ENCODE measurements at regions of chr3 and their contacts with region 1.

Region 1: DNA sequence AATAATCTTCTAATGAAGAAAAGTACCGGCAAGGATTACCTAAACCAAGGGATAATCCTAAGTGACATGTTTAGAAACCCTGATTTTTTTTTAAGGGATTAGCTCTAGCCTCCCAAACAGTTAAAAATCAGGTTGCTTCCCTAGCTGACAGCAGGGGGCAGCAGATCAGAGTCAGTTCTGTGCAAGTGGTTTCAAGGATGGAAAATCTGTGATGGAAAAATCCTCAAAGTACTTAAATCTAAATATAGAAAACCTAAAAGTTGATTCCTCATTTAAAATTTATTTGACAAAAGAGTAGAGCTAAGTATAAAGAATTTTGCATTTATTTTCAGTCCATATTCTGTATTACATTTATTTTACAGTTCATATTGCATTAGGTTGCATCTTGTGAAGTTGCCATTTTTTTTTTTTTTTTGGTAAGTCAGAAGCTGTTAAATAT is 107.6 kb downstream of the PEX5L start:
- DNase-seq: peak in 1 of 2 experiments; percentile 61
- H3K4me3 ChIP-seq: no peak overlapping the region
- H3K27ac ChIP-seq: no peak overlapping the region
- H3K4me1 ChIP-seq: no peaks in the 10 kb centered on the region
- H3K27me3 ChIP-seq: no peaks in the 10 kb centered on the region
- CTCF ChIP-seq: peak; percentile 95

Region 2: DNA sequence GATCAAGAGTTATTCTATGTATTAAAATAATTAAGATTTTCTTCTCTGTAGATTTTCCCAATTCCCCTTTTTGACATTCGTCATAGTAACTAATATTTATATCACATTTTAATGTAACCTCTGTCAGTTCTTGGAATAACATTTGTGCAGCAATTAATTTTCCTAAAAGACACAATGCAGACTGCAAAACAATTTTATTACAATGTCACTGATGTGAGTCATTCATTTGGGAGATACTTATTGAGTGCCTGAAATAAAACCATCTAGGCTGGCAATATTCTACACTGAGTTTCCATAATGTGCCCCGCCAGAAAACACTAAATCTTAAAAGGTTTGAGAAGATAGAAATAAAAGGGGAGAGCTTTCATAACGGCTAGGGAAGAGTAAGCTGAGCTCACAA is 282.9 kb before region 1 on chr3:
- CTCF ChIA-PET with region 1: interaction called, 4 read pairs
- POLR2A ChIA-PET with region 1: no interaction called
- intact Hi-C with region 1: loop called (anchors 5 kb)
- DNase-seq: no peak
- H3K4me3 ChIP-seq: no peak overlapping the region
- H3K27ac ChIP-seq: no peak overlapping the region
- H3K4me1 ChIP-seq: peaks cover 15% of the 10 kb centered on the region
- H3K27me3 ChIP-seq: no peaks in the 10 kb centered on the region
- CTCF ChIP-seq: no peak

Region 3: DNA sequence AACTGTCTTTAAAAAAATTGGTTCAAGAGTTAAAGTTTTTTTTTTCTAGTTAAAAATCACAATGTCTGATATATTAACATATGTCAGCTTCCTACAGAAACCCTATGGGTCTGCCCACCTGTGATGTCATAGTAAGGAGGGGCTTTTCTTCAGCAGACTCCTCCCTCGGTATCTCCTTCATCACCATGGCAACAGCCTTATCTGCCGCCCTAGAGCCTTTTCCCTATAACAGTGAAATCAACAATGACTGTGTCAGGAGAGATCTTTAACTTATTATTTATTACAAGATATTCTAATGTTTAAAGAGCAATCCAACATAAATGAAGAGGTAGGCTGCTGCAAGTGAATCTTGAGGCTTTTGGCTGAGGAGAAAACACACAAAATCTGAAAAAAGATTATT is 31.1 kb before region 1 on chr3:
- CTCF ChIA-PET with region 1: no interaction called
- POLR2A ChIA-PET with region 1: no interaction called
- intact Hi-C with region 1: no loop called
- DNase-seq: peak; percentile 19 to 71
- H3K4me3 ChIP-seq: no peak overlapping the region
- H3K27ac ChIP-seq: no peak overlapping the region
- H3K4me1 ChIP-seq: no peaks in the 10 kb centered on the region
- H3K27me3 ChIP-seq: no peaks in the 10 kb centered on the region
- CTCF ChIP-seq: no peak

Region 4: DNA sequence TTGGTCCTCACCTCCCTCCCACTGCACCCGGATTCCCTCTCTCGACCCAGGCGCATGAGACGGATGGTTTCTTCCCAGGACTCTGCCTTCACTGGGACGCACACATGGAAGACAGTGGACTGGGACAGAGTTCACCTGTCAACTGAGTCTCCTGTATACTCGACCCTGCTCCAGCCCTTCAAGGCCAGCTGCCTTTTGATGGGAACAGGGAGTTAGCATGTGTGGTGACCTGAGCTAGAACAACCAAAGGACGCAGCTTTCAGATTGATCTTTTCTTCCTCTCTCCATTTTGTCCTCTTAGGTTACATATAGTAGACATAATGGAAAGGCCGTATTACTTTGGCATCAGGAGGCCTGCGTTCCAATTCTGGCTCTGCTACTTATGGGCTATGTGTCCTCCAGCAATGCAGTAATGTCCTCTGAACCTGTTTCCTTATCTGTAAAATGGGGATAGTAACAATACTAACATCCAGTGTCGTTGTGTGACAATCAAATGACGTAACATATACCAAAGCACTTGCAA is 13.5 kb after region 1 on chr3:
- CTCF ChIA-PET with region 1: no interaction called
- POLR2A ChIA-PET with region 1: no interaction called
- intact Hi-C with region 1: no loop called
- DNase-seq: no peak
- H3K4me3 ChIP-seq: no peak overlapping the region
- H3K27ac ChIP-seq: no peak overlapping the region
- H3K4me1 ChIP-seq: no peaks in the 10 kb centered on the region
- H3K27me3 ChIP-seq: no peaks in the 10 kb centered on the region
- CTCF ChIP-seq: no peak

Region 5: DNA sequence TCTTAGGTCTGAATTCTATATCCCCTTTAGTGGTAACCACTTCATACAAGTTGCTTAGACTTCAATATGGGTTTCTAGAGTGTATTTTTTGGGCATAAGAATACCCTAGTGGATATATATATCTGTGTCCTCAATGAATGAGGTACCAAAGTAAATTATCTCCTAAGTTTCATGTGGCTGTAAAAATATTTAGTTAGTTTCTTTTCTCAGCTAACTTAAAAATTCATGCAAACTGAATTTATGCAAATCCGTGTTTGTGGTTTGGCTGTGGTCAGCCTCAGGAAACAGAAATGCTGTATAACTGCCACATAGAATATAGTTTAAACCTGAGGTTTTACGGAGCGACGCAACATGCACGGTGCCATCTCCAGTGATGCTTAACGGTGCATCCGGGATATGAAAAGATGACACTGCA is 27.3 kb after region 1 on chr3:
- CTCF ChIA-PET with region 1: interaction called, 16 read pairs
- POLR2A ChIA-PET with region 1: interaction called, 4 read pairs
- intact Hi-C with region 1: no loop called
- DNase-seq: no peak
- H3K4me3 ChIP-seq: no peak overlapping the region
- H3K27ac ChIP-seq: no peak overlapping the region
- H3K4me1 ChIP-seq: no peaks in the 10 kb centered on the region
- H3K27me3 ChIP-seq: no peaks in the 10 kb centered on the region
- CTCF ChIP-seq: no peak

Region 6: DNA sequence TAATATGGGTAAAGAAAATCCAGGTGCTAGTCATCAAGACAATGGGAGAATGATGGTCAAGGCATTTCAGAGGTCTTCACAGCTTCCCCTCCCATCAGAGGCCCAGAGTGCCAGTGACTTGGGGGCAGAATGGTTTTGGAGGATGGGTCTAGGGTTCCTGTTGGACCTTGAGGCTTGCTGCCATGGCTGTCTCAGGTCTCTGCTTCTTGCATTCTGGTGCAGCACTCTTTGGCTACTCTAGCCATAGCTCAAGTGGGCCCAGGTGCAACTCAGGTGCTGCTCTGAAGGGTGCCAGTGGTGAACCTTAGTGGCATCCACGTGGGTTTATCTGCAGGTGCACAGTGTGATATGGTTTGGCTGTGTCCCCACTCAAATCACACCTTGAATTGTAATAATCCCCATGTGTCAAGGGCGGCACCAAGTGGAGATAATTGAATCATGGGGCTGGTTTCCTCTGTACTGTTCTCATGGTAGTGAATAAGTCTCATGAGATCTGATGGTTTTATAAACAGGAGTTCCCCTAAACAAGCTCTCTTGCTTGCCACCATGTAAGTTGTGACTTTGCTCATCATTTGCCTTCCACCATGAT is 156.1 kb after region 1 on chr3:
- CTCF ChIA-PET with region 1: no interaction called
- POLR2A ChIA-PET with region 1: no interaction called
- intact Hi-C with region 1: loop called (anchors 2 kb)
- DNase-seq: peak in 1 of 2 experiments; percentile 15
- H3K4me3 ChIP-seq: no peak overlapping the region
- H3K27ac ChIP-seq: no peak overlapping the region
- H3K4me1 ChIP-seq: no peaks in the 10 kb centered on the region
- H3K27me3 ChIP-seq: no peaks in the 10 kb centered on the region
- CTCF ChIP-seq: no peak

Region 7: GRCh38 chr3:180594631-180595558 is 665.8 kb after region 1 on chr3:
- CTCF ChIA-PET with region 1: interaction called, 4 read pairs
- POLR2A ChIA-PET with region 1: no interaction called
- intact Hi-C with region 1: loop called (anchors 1 kb)
- DNase-seq: no peak
- H3K4me3 ChIP-seq: no peak overlapping the region
- H3K27ac ChIP-seq: no peak overlapping the region
- H3K4me1 ChIP-seq: no peaks in the 10 kb centered on the region
- H3K27me3 ChIP-seq: no peaks in the 10 kb centered on the region
- CTCF ChIP-seq: peak; percentile 79

Measured in PC-9 (cell line).